ENCODE measurements at regions of chr12 and their contacts with region 1.

Region 1: GRCh38 chr12:47844274-47845019 is 24.7 kb upstream of the HDAC7 start:
- DNase-seq: no peak
- H3K4me3 ChIP-seq: no peak overlapping the region
- H3K27ac ChIP-seq: no peak overlapping the region
- H3K4me1 ChIP-seq: peaks cover 0 to 7% (median 0%) of the 10 kb centered on the region in 4 donors
- H3K27me3 ChIP-seq: no peaks in the 10 kb centered on the region
- CTCF ChIP-seq: no peak
- EP300 ChIP-seq: no peak
- POLR2A ChIP-seq: no peak

Region 2: DNA sequence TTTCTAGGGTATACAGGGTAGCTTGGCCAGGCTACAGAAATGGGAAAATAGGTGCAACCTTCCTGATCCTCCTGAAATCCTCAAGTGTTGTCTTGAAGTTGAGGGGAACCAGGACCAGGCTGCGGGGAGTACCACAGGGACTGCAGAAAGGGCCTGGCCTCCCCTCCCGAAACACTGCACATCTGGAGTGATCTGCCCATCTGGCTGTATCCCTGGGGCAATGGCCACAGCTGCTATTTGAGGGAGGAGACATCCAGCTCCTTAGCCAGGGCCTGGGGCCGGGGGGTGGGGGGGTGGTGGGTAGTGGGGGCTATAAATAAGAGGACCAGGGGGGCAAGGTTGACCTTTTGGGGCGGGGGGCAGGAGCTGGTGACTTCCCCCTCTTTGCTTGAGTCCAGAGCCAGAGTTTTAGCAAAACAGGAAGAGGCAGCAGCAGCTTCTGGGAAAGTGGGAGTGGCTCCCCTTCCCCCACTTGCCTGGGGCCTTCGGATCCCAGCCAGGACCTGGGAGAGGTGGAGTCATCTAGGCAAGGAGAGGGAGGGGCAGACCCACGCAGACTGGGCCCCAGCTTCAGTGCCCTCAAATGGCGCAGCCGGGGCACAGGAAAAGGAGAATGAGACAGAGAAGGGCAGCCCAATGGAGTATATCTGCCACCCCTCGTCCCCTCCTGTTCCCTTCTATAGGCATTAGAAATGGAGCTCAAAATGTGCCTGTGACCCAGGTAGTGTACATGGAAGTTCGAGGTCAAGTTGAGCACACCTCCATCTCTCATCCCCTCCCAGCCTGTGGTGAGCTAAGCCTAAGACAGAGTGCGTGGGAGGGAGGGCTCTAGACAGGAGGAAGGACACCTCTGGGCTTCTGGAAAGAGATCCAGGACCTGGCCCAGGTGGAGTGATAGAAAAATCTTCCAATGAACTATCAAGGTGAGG is 15.6 kb before region 1 on chr12:
- in situ Hi-C with region 1: no loop called
- intact Hi-C with region 1: loop called (anchors 1 kb)
- DNase-seq: peak; percentile 82
- H3K4me3 ChIP-seq: no peak overlapping the region
- H3K27ac ChIP-seq: peak overlapping the region; percentile 65 to 96 (median 74)
- H3K4me1 ChIP-seq: peaks cover 27 to 41% (median 29%) of the 10 kb centered on the region in 4 donors
- H3K27me3 ChIP-seq: no peaks in the 10 kb centered on the region
- CTCF ChIP-seq: no peak
- EP300 ChIP-seq: no peak
- POLR2A ChIP-seq: no peak

Measured in transverse colon (tissue), 4 donors.